AG04449 (cell line): ENCODE measurements at regions of chr1 and their contacts with region 1.

Region 1: DNA sequence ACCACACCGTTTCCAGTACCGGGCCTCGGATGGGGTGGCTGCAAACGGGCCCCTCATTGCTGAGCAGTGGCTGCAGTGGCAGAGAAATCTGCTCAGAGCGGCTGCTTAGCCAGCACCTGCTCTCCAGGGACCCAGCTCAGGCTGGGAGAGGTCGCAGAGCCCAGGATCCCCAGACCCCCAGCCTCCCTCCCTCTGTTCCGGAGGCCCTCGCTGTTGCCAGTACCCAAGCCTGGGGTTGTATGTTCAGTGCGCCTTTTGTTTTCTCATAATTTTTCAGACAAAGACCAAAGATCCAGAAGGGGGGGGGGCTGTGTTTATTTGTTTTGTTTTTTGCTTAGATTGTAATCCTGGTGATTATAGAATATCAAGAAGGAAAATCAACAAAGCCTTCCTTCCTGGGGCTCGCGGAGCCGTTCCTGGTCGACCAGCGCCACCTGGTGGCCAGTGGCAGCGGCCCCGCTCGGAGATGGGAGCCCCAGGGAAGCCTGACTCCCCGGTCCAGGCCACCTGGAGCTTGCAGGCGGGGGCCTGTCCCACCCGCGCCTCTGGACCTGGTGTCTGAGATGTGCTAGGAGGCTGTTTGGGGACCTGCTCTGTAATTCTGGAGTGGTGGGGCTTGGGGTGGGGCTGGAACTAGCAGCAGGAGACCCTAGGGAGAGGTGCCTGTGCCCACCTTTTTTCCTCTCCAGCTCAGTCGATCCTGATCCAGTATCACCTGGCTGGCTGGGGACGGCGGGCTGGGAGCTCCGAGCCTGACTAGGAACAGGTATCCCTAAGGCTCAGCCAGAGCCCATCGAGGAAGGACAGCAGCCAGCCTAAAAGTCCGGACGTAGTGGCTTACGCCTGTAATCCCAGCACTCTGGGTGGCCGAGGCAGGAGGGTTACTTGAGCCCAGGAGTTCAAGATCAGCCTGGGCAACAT is 123.9 kb upstream of the VAMP3 start:
- DNase-seq: no peak
- H3K4me3 ChIP-seq: no peak overlapping the region
- CTCF ChIP-seq: peak; percentile 90

Region 2: DNA sequence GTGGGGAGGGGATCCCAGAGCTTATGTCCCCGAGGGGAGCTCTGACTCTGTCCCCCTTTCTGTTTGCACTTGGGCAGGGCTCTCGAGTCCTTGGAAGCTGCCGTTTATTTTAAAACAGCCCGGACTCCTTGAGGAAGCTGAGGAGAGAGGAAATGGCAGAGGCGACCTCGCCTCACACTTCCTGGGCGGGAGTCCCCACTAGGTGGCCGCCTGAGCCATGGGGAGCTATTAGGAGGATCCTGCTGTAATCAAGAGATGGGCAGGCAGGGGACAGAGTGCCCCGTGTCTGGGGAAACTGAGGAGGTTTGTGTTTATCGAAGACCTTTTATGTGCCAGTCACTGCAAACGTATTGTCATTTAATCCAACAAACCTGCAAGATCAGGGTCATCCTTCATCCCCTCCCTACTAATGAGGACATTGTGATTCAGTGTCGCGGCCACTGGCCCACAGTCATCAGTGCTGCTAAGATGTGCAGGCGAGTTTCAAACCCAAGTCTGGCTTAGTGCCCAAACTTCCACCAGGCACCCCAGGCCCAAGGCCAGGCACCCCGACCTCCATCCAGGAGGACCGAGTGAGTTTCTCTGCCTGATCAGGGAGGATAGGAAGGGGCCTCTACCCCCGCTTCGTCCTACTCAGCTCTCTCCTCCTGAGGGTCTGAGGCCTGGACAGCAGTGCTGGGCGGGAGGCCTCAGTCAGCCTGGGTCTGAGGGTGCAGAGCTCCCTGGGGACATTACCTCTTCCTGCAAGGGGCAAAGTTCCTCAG is 193.0 kb before region 1 on chr1:
- CTCF ChIA-PET with region 1: interaction called, 27 read pairs
- POLR2A ChIA-PET with region 1: no interaction called
- DNase-seq: no peak
- H3K4me3 ChIP-seq: no peak overlapping the region
- CTCF ChIP-seq: peak; percentile 72

Region 3: GRCh38 chr1:7659514-7659913 is 12.3 kb after region 1 on chr1:
- CTCF ChIA-PET with region 1: interaction called, 62 read pairs
- POLR2A ChIA-PET with region 1: no interaction called
- DNase-seq: no peak
- H3K4me3 ChIP-seq: no peak overlapping the region
- CTCF ChIP-seq: no peak